ENCODE measurements at regions of chr14 and their contacts with region 1.

Region 1: DNA sequence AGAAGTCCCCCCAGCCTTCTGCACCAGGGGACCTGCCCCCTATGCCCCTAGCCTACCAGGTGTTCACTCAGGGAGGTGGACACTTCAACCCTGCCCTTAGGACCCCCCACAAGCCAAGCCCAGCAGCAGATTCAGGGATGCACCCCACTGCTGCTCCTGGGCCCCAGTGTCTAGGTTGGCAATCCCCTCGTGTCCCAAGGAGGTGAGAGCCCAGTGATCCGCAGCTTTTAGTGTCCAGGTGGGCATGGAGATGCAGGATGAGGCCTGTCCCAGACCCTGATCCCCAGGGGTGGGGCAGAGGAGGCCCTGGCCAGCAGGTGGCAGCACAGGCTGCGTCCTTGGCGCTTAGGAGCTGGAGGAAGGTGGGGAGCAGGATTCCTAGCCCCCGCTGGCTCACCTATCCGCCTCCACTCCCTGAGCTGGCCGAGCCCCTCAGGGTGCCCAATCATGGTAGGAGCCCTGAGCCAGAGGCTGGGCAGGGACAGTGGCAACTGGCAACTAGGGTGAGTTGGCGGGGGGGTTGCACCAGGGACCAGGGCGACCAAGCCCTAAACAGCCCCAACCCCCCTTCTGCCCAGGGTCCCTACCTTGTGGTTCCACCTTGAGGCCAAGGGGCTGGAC is 4.1 kb downstream of the CKB start:
- DNase-seq: peak in 5 of 6 donors; percentile 52 to 91 (median 81)
- ATAC-seq: peak; percentile 25 to 61 (median 42)
- H3K4me3 ChIP-seq: no peak overlapping the region
- H3K27ac ChIP-seq: no peak overlapping the region
- H3K4me1 ChIP-seq: peaks cover 0 to 10% (median 4%) of the 10 kb centered on the region in 3 donors
- H3K27me3 ChIP-seq: no peaks in the 10 kb centered on the region
- CTCF ChIP-seq: peak; percentile 76 to 88 (median 86)

Region 2: DNA sequence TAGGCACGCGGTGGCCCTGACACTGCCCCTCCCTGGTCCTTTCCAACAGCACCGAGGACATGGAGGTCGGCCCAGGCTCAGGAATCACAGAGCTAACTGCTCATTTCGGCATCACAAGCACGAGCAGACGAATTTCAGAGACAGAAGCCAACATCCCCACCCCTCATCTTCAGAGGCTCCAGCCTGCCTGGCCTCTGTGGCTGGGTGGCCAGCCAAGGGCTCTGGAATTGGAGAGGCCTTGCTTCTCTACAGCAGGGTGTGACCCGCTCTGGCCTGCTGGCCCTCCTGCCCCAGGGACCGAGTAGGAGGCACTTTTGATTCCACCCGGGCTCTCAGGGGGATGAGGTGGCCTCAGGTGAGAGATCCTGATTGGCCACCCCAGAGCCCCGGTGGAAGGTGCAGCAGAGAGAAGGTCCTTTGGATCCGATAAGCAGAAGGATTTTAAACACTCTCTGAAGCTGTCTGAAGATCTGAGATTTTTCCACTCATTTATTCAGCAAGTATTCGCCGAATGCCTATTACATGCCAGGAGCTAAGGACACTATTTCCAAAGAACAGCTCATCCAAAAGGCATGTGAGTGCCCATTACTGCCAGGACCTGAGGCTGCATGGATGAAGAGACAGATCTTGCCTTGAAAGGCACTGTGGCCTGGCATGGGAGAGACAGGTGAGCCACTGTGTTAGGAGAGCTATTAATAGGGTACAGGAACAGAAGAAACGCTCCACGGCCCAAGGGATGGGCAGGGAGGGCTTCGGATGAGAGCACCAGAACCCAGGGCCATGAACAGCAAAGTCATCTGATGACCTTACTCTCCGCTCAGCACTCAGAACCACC is 33.7 kb after region 1 on chr14:
- intact Hi-C with region 1: loop called in 2 of 3 experiments (anchors 2 to 5 kb)
- DNase-seq: peak in 2 of 6 donors; percentile 20 to 51
- ATAC-seq: peak in 1 of 4 donors; percentile 10
- H3K4me3 ChIP-seq: no peak overlapping the region
- H3K27ac ChIP-seq: no peak overlapping the region
- H3K4me1 ChIP-seq: peaks cover 1 to 11% (median 3%) of the 10 kb centered on the region in 3 donors
- H3K27me3 ChIP-seq: no peaks in the 10 kb centered on the region
- CTCF ChIP-seq: no peak

Measured in pancreas (tissue), 10 donors.